Common myeloid progenitor, CD34-positive (primary cell): ENCODE measurements at regions of chr10 and their contacts with region 1.

Region 1: GRCh38 chr10:73886085-73886529 is 11.8 kb upstream of the CAMK2G start:
- DNase-seq: peak; percentile 71 to 79 (median 74)
- H3K4me3 ChIP-seq: no peak overlapping the region
- H3K27ac ChIP-seq: no peak overlapping the region
- H3K4me1 ChIP-seq: peaks cover 0 to 32% (median 5%) of the 10 kb centered on the region in 4 experiments
- H3K27me3 ChIP-seq: no peaks in the 10 kb centered on the region

Region 2: DNA sequence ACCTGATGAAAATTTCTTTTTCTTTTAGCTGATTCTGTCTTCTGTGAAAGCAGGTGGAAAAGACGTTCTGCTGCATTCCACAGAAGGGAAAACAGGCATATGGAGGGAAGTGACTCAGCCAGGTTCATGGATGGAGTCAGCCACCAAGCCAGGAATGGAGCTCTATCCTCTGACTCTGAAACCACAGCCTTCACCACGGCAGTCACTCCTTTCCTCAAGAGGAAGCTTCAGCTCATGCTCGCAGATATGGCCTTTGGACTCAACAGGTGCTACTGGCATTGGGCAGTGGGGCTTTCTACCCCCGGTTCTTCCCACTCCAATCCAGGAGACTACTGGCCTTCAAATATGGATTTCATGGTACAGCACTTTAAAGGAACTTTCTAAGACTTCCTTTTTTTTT is 13.3 kb after region 1 on chr10:
- CTCF ChIA-PET with region 1: interaction called, 63 read pairs
- POLR2A ChIA-PET with region 1: no interaction called
- DNase-seq: peak in 2 of 3 donors; percentile 55 to 66
- H3K4me3 ChIP-seq: no peak overlapping the region
- H3K27ac ChIP-seq: no peak overlapping the region
- H3K4me1 ChIP-seq: peaks cover 5 to 42% (median 7%) of the 10 kb centered on the region in 4 experiments
- H3K27me3 ChIP-seq: no peaks in the 10 kb centered on the region

Region 3: DNA sequence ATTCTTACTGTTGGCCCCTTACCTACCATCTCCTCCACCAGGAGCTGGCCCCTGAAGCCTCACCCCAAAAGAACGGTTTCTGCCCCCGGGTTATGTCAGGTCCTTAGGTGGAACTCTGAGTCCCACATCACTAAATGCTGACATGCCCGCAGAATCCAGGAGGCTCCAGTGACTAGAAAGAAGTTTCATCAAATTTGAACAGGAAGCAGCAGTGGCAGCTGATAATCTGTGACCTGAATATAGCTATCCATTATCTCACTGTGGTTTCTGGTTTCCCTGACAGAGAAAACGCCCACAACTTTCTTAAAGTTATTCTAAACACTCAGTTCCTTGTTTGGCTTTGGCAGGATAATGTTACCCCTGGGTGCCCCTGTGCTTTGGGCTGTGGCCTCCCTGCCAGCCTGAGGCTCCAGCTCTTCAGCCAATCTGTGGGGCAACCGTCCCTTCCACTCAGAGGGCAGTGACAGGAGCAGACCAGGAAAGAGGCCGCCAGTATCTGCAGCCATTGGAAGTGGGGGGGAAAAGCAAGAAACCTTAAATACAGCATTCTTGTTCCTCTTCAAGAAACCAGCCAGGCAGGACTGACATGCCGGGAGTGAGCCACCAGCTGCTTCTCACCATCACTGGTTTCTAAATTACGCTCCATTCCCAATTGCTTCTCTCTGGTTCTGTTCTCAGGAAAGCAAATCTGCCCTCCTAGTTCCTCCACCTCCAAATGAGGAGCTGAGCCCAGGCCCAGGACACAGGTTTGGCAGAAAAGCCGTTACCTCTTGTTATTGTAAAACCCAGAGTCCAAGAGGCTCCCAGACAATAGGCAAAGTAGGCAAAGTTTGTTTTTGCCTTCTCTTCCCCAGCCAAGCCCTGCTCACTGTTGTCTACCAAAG is 70.6 kb after region 1 on chr10:
- CTCF ChIA-PET with region 1: interaction called, 16 read pairs
- POLR2A ChIA-PET with region 1: no interaction called
- DNase-seq: peak; percentile 89 to 98 (median 96)
- H3K4me3 ChIP-seq: peak overlapping the region in 6 of 7 experiments; percentile 1 to 63 (median 36)
- H3K27ac ChIP-seq: peak overlapping the region; percentile 78 to 86
- H3K4me1 ChIP-seq: peaks cover 40 to 50% (median 43%) of the 10 kb centered on the region in 4 experiments
- H3K27me3 ChIP-seq: no peaks in the 10 kb centered on the region

Region 4: GRCh38 chr10:74035303-74035702 is 149.2 kb after region 1 on chr10:
- CTCF ChIA-PET with region 1: interaction called, 11 read pairs
- POLR2A ChIA-PET with region 1: no interaction called
- DNase-seq: peak in 2 of 3 donors; percentile 48 to 57
- H3K4me3 ChIP-seq: no peak overlapping the region
- H3K27ac ChIP-seq: no peak overlapping the region
- H3K4me1 ChIP-seq: peaks cover 17 to 24% (median 19%) of the 10 kb centered on the region in 4 experiments
- H3K27me3 ChIP-seq: no peaks in the 10 kb centered on the region

Region 5: DNA sequence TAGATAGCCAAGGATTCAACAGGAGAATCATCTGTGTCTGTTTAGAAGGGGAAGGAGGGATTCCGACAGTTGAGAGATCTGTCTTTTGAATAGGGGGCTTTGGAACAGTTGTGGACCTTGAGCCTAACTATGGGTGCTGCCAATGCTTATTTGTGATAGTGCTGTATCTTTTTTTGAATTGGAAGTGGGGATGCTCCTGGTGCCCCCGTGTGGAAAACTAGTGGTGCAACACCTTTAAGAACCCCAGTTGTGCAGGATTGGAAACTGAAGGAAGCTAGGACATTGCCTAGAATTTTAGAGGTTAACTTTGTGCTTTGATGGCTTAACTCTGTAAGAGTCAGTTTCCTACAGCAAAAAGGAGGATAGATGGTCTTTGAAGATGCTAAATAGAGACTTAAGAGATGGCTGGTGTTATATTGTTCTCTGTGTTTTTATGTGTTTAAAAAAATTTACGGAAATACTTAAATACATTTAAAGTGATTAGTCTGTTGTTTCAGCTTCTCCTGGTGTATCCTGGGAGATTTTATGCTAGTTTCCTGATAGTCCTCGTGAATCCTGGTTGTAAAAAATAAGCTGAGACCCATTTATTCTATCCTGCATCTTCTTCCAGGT is 195.2 kb after region 1 on chr10:
- CTCF ChIA-PET with region 1: interaction called, 73 read pairs
- POLR2A ChIA-PET with region 1: interaction called, 4 read pairs
- DNase-seq: peak; percentile 59 to 72 (median 64)
- H3K4me3 ChIP-seq: no peak overlapping the region
- H3K27ac ChIP-seq: no peak overlapping the region
- H3K4me1 ChIP-seq: peaks cover 4 to 32% (median 11%) of the 10 kb centered on the region in 4 experiments
- H3K27me3 ChIP-seq: no peaks in the 10 kb centered on the region